ENCODE measurements at regions of chr2 and their contacts with region 1.

Region 1: GRCh38 chr2:202588647-202589581 is 45.9 kb upstream of the FAM117B start:
- DNase-seq: no peak
- H3K4me3 ChIP-seq: no peak overlapping the region
- H3K27me3 ChIP-seq: no peaks in the 10 kb centered on the region
- CTCF ChIP-seq: peak; percentile 91

Region 2: DNA sequence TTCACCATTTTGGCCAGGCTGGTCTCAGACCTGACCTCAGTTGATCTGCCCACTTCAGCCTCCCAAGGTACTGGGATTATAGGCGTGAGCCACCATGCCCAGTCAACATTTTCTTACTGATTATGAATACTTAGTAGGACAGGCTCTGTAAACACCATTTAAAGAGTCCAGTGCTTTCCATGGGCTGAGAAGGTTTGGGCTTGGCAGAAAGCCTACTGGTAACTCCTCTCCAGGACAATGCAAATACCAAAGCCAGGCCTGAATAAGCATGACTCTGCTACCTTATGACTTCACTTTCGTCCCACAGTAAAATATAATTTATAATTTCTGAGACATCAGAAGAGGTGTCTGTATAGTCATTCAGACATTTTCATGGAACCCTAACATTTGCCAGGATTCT is 14.4 kb before region 1 on chr2:
- CTCF ChIA-PET with region 1: interaction called, 10 read pairs
- POLR2A ChIA-PET with region 1: no interaction called
- DNase-seq: no peak
- H3K4me3 ChIP-seq: no peak overlapping the region
- H3K27me3 ChIP-seq: no peaks in the 10 kb centered on the region
- CTCF ChIP-seq: no peak

Region 3: DNA sequence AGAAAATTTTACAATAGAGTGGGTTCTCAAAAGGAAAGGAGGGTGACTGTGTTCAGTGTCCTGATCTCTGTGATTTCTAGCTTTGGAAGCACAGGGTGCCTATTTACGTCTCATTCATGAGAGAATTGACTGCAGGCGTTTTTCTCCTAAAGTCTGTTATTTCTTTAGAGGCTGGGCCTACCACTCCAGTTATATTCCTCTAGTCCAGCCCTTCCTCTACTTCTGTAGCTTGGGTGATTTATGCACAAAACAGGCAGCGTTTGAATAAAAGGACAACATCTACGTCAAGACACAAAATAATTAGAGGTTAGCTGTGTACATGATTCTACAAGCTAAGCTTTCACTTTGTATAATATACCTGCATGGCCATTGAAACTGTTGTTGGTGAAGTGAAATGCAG is 13.4 kb after region 1 on chr2:
- CTCF ChIA-PET with region 1: interaction called, 30 read pairs
- POLR2A ChIA-PET with region 1: no interaction called
- DNase-seq: no peak
- H3K4me3 ChIP-seq: no peak overlapping the region
- H3K27me3 ChIP-seq: no peaks in the 10 kb centered on the region
- CTCF ChIP-seq: no peak